ENCODE measurements at regions of chr9 and their contacts with region 1.

Region 1: GRCh38 chr9:105531530-105531929 is 26.4 kb upstream of the FKTN start:
- DNase-seq: no peak
- H3K4me3 ChIP-seq: no peak overlapping the region
- H3K27ac ChIP-seq: no peak overlapping the region
- H3K27me3 ChIP-seq: no peaks in the 10 kb centered on the region
- CTCF ChIP-seq: no peak

Region 2: DNA sequence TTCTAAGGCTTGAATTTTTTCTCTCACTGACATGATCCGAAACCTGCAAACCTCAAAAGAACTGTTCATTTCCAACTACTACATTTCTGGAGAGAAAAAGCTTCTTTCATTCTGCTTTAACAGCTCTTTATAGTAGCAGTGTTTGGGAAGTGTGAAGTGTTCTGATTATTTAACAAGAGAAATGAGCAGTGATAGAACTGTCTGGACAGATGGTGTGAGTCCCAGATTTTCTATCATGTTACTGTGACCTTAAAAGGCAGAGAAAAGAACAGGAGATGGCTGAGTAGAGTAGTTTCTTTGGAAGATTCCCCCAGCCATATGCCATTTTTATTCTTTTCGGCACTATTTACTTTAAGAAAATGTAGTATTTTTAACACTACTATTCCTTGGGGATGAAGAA is 89.5 kb after region 1 on chr9:
- intact Hi-C with region 1: loop called in 1 of 2 experiments (anchors 5 kb)
- DNase-seq: no peak
- H3K4me3 ChIP-seq: no peak overlapping the region
- H3K27ac ChIP-seq: no peak overlapping the region
- H3K27me3 ChIP-seq: no peaks in the 10 kb centered on the region
- CTCF ChIP-seq: no peak

Measured in dorsolateral prefrontal cortex (tissue), 120 donors.